ENCODE measurements at regions of chr11 and their contacts with region 1.

Region 1: DNA sequence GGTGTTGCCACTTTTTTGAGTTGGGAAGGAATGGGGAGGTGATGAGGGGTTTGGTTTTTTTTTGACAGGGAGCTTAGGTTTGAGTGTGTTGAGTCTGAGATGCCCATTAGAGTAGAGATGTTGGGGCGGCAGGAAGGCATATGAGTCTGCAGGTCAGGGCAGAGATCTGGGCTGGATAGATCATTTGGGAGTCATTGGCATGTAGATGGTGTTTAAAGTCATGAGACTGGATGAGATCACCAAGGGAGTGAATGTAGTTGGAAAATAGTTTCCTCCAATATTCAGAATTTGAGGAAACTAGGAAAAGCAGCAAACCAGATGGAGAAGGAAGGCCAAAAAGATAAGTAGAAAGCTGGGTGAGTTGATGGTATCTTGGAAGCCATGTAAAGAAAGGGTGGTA is 2.1 kb upstream of the ANAPC15 start:
- DNase-seq: no peak

Region 2: DNA sequence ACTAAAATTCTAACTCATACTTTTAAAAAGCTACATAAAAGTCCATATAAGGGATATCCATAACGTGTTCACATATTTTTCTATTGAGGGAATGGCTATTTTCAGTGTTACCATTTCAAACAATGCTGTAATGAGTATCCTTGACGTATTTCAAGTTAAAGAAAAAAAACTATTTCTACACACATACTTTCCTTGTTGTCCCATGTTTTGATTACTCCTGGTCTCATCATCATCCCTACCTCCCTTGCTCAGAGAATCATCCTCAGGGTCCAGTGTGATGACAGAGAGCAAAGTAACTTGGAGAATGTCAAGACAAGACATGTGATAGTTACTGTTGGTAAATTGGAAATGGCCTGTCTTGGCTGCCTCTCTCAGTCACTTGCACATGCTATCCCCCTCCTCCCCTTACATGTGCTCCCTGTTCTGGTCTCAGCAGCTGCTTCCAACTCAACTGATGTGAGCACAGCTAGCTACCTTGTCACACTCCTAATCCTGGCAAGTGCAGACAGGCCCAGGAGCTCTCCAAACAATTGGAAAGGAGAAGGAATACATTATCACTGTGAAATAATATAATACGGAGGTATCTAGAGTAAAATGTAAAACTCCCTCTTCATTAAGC is 56.0 kb before region 1 on chr11:
- intact Hi-C with region 1: loop called in 1 of 2 experiments (anchors 1 kb)
- DNase-seq: no peak

Measured in posterior vena cava (tissue), 2 donors.